ENCODE measurements at regions of chr11 and their contacts with region 1.

Region 1: GRCh38 chr11:65274735-65275682 is 13.2 kb downstream of the POLA2 start:
- DNase-seq: peak; percentile 85
- ATAC-seq: peak; percentile 90 to 92

Region 2: GRCh38 chr11:65314501-65315203 is 39.6 kb after region 1 on chr11 and contains the start of gene CDC42EP2:
- intact Hi-C with region 1: loop called (anchors 1 to 5 kb)
- DNase-seq: peak; percentile 90
- ATAC-seq: peak; percentile 94 to 95
- total RNA-seq, gene CDC42EP2: 21.7 to 28.9 TPM

Region 3: DNA sequence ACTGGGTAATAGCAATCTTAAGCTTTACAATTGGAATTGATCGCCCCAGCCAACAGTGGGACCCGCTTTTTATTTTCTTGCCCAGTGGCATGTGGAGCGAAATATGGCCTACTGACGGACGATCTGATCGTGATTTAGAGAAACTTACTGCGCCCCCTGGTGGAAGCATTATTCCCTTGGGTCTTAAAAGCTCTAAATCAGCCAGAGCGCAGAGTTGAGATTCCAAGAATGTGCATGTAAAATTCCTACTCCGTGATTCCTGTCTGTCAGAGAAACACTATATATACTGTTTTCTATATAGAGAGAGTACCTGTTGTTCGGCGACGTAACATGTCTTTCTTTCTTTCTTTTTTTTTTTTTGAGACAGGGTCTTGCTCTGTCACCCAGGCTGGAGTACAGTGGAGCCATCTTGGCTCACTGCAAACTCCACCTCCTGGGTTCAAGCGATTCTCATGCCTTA is 55.0 kb after region 1 on chr11:
- intact Hi-C with region 1: loop called in 1 of 2 experiments (anchors 2 kb)
- DNase-seq: peak; percentile 92
- ATAC-seq: peak in 1 of 2 donors; percentile 24

Measured in left cardiac atrium (tissue), 4 donors.